H1 (cell line): ENCODE measurements at regions of chr16 and their contacts with region 1.

Region 1: GRCh38 chr16:4746991-4747574 is 12.7 kb downstream of the DNAAF8 start:
- DNase-seq: no peak
- H3K4me3 ChIP-seq: no peak overlapping the region
- H3K27ac ChIP-seq: no peak overlapping the region
- H3K4me1 ChIP-seq: peaks cover 4 to 9% (median 6%) of the 10 kb centered on the region in 4 experiments
- H3K27me3 ChIP-seq: no peaks in the 10 kb centered on the region
- CTCF ChIP-seq: no peak
- EP300 ChIP-seq: no peak
- POLR2A ChIP-seq: no peak
- RAD21 ChIP-seq: no peak

Region 2: DNA sequence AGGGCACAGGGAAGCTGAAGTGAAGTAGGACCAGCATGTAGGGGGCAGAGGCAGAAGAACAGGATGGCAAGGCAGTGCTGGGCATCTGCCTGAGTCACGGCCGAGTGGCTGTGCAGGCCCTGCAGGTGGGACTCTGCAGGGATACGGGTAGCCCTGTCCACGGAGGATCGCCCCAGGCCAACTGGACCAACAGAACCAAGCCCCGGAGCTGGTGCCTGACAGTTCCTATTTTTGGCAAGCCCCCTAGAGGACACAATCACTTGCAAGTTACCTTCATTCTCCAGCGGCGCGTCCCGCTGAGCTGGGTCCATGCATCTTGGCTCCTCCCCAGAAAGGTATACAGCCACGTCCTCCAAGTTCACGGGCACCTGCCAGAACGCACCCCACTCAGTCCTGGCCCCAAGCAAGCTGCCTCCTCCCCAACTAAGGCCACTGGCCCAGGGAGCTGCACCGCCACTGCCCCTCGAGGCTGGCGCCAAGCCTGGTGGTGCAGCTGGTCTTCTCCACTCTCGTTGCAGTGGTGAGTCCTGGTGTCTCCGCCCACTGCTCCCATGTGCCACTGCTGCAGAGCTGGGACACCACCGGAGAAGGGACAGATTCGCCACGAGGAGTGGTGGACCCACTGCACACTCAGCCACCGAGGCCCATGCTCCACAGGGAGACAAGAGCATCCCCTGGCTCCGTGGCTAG is 13.3 kb after region 1 on chr16:
- CTCF ChIA-PET with region 1: interaction called, 8 read pairs
- POLR2A ChIA-PET with region 1: interaction called, 16 read pairs
- DNase-seq: no peak
- H3K4me3 ChIP-seq: no peak overlapping the region
- H3K27ac ChIP-seq: no peak overlapping the region
- H3K4me1 ChIP-seq: no peaks in the 10 kb centered on the region
- H3K27me3 ChIP-seq: no peaks in the 10 kb centered on the region
- CTCF ChIP-seq: no peak
- EP300 ChIP-seq: no peak
- POLR2A ChIP-seq: no peak
- RAD21 ChIP-seq: no peak